Activated CD8-positive, alpha-beta T cell treated with anti-CD3 and anti-CD28 coated beads for 36 hours (primary cell): ENCODE measurements at regions of chr6 and their contacts with region 1.

Region 1: GRCh38 chr6:3052481-3053230 is 15.6 kb upstream of the RIPK1 start:
- DNase-seq: no peak
- ATAC-seq: no peak
- H3K4me3 Mint-ChIP-seq: peak overlapping the region; percentile 69
- H3K27ac Mint-ChIP-seq: peak overlapping the region; percentile 32
- H3K4me1 Mint-ChIP-seq: peaks cover 13% of the 10 kb centered on the region
- H3K27me3 Mint-ChIP-seq: no peaks in the 10 kb centered on the region
- CTCF ChIP-seq: no peak

Region 2: DNA sequence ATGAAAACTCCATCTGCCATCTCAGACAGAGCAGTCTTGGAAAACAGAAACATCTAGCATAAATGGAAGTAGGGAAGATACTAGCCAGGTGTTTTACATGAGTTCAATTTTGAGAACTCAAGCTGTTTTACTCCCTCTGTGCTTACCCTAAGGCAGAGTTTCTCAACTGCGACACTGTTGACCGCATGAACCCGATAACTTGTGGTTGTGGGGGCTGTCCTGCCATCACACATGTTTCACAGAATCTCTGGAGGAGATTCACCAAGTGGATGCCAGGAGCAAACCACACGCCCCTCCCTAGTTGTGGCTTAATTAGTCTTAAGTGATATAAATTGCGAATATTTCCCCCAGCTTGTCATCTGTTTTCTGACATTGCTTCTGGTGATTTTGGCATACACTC is 79.0 kb before region 1 on chr6:
- CTCF ChIA-PET with region 1: no interaction called
- POLR2A ChIA-PET with region 1: no interaction called
- intact Hi-C with region 1: no loop called
- DNase-seq: peak; percentile 42
- ATAC-seq: no peak
- H3K4me3 Mint-ChIP-seq: no peak overlapping the region
- H3K27ac Mint-ChIP-seq: no peak overlapping the region
- H3K4me1 Mint-ChIP-seq: peaks cover 45% of the 10 kb centered on the region
- H3K27me3 Mint-ChIP-seq: no peaks in the 10 kb centered on the region
- CTCF ChIP-seq: no peak

Region 3: GRCh38 chr6:2999618-3000557 is 52.8 kb before region 1 on chr6 and contains the start of gene NQO2:
- CTCF ChIA-PET with region 1: interaction called, 18 read pairs
- POLR2A ChIA-PET with region 1: interaction called, 3 read pairs
- intact Hi-C with region 1: loop called (anchors 2 kb)
- DNase-seq: peak; percentile 92
- ATAC-seq: peak; percentile 83
- H3K4me3 Mint-ChIP-seq: peak within 1 kb of the TSS; percentile 83
- H3K27ac Mint-ChIP-seq: peak within 1 kb of the TSS; percentile 94
- H3K4me1 Mint-ChIP-seq: peaks cover 20% of the 10 kb centered on the region
- H3K27me3 Mint-ChIP-seq: no peaks in the 10 kb centered on the region
- CTCF ChIP-seq: no peak
- total RNA-seq, gene NQO2: 23.8 to 24.7 TPM